ENCODE measurements at regions of chr13 and their contacts with region 1.

Region 1: GRCh38 chr13:29508130-29508875 is 87.2 kb downstream of the SLC7A1 start:
- DNase-seq: peak; percentile 90 to 95
- H3K4me3 ChIP-seq: no peak overlapping the region
- H3K27ac ChIP-seq: peak overlapping the region in 1 of 5 donors; percentile 64
- H3K4me1 ChIP-seq: peaks cover 0 to 31% (median 14%) of the 10 kb centered on the region in 4 donors
- H3K27me3 ChIP-seq: peaks cover 0 to 13% (median 7%) of the 10 kb centered on the region in 3 donors
- CTCF ChIP-seq: peak in 5 of 7 experiments; percentile 90 to 98 (median 94)
- EP300 ChIP-seq: no peak
- POLR2A ChIP-seq: no peak

Region 2: DNA sequence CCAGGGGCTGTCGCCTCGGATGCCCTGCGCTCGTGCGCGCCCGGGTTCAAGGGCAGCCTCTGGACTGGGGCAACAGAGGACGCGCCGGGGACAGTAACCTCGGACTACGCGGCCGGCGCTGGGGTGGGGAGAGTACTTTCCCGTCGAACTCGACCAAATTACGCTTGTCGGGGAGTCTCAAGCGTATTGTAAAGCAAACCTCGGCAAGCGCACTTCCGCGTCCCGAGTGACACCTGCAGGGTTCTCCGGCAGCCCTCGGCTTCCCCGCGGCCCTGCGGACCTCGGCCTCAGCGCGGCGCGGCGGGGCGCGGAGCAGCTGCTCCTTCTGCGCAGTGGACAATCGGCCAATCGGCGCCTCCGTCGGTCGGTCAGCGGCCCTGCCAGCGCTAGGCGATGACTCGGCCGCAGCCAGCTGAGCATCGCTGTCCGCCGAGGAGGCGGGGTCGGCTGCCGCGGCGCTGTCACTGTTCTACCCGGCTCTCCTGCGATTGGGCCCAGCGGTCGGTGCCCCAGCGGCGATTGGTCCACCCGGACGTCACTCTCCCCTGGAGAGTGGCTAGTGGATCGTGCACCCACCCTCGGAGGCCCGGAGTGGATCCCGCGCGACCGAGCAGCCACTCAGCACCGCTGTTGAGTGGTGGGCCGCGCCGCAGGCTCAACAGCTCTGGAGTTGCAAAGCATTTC is 789.6 kb before region 1 on chr13 and contains the start of gene SLC46A3:
- intact Hi-C with region 1: no loop called
- DNase-seq: peak; percentile 92 to 98
- H3K4me3 ChIP-seq: peak within 1 kb of the TSS; percentile 46 to 63 (median 60)
- H3K27ac ChIP-seq: peak within 1 kb of the TSS; percentile 71 to 95 (median 91)
- H3K4me1 ChIP-seq: peaks cover 4 to 31% (median 14%) of the 10 kb centered on the region in 4 donors
- H3K27me3 ChIP-seq: peaks cover 0 to 7% (median 0%) of the 10 kb centered on the region in 3 donors
- CTCF ChIP-seq: no peak
- EP300 ChIP-seq: no peak
- POLR2A ChIP-seq: no peak
- total RNA-seq, gene SLC46A3: 5.3 to 44.3 (median 14.2) TPM

Region 3: GRCh38 chr13:29713839-29714238 is 205.5 kb after region 1 on chr13:
- intact Hi-C with region 1: loop called (anchors 10 kb)
- DNase-seq: no peak
- H3K4me3 ChIP-seq: no peak overlapping the region
- H3K27ac ChIP-seq: no peak overlapping the region
- H3K4me1 ChIP-seq: no peaks in the 10 kb centered on the region
- H3K27me3 ChIP-seq: no peaks in the 10 kb centered on the region
- CTCF ChIP-seq: peak in 4 of 7 experiments; percentile 11 to 39 (median 25)
- EP300 ChIP-seq: no peak
- POLR2A ChIP-seq: no peak

Region 4: DNA sequence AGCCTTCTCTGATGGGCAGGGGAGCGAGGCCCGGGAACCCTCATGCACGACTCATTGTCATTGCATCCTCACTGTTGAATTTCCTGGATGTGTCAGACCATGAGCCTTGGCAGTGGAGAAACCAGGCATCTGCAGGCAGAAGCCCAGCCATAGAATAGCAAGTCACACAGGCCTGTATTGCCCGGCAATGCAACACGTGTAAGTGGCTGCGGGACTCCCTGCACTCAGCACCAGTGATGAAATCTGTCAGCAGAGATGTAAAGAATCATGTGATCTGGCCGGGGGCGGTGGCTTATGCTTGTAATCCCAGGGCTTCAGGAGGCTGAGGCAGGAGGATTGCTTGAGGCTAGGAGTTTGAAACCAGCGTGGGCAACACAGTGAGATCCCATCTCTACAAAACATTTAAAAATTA is 599.3 kb after region 1 on chr13:
- intact Hi-C with region 1: loop called (anchors 5 kb)
- DNase-seq: peak in 1 of 2 donors; percentile 37
- H3K4me3 ChIP-seq: no peak overlapping the region
- H3K27ac ChIP-seq: peak overlapping the region; percentile 71 to 82 (median 79)
- H3K4me1 ChIP-seq: peaks cover 6 to 55% (median 19%) of the 10 kb centered on the region in 4 donors
- H3K27me3 ChIP-seq: no peaks in the 10 kb centered on the region
- CTCF ChIP-seq: no peak
- EP300 ChIP-seq: no peak
- POLR2A ChIP-seq: no peak

Measured in stomach (tissue), 19 donors.